ENCODE measurements at regions of chr10 and their contacts with region 1.

Region 1: DNA sequence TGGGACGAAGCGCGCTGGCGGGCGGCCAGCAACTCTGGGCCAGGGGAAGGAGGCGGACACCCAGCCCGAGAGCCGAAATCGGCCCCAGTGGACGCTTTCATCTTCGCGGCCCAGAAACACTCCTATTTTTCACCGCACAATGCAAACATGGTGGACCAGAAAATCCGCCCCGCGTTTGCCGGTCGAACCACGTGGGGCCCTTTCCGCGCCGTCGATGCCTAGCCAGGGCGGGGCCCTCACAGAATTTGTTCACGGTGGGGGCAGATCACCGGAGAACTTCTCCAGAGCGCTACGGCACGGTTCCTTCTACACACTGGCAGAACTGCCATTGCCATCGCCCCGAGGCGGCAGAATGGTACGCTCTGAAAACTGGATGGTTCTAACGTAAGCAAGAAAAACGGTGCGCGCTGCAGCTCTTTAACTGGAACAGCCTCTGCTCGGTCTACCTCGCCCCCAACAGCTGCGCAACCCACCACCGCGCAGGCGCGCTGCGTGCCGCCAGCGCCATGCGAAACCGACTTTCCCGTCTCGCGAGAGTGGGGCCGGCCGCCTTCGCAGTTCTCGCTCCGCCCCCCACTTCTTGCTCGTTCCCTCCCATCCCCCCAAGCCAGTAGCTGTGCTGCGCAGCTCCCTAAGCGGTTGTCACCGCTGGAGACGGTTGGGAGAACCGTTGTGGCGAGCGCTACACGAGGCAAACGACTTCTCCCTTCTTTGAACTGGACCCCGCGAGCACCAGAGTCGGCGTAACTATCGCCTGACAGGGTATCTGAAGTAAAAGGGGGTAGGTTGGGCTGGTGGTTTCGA is at the start of gene HNRNPH3:
- DNase-seq: peak; percentile 100
- ATAC-seq: peak; percentile 74
- H3K4me3 ChIP-seq: peak within 1 kb of the TSS; percentile 87
- H3K27ac ChIP-seq: peak within 1 kb of the TSS; percentile 82
- H3K4me1 ChIP-seq: peaks cover 44% of the 10 kb centered on the region
- H3K27me3 ChIP-seq: no peaks in the 10 kb centered on the region
- CTCF ChIP-seq: no peak
- total RNA-seq, gene HNRNPH3: 40.5 and 77.5 TPM in 2 replicates

Region 2: GRCh38 chr10:68082872-68083271 is 248.8 kb before region 1 on chr10:
- CTCF ChIA-PET with region 1: no interaction called
- POLR2A ChIA-PET with region 1: interaction called, 19 read pairs
- intact Hi-C with region 1: loop called (anchors 5 kb)
- DNase-seq: peak; percentile 89
- ATAC-seq: peak; percentile 14; the same call in 1 of the 2 replicates
- H3K4me3 ChIP-seq: no peak overlapping the region
- H3K27ac ChIP-seq: peak overlapping the region; percentile 57
- H3K4me1 ChIP-seq: peaks cover 63% of the 10 kb centered on the region
- H3K27me3 ChIP-seq: no peaks in the 10 kb centered on the region
- CTCF ChIP-seq: peak; percentile 98

Region 3: GRCh38 chr10:68088744-68089143 is 242.9 kb before region 1 on chr10:
- CTCF ChIA-PET with region 1: no interaction called
- POLR2A ChIA-PET with region 1: interaction called, 19 read pairs
- intact Hi-C with region 1: loop called (anchors 5 kb)
- DNase-seq: peak; percentile 49
- ATAC-seq: no peak
- H3K4me3 ChIP-seq: peak overlapping the region; percentile 66
- H3K27ac ChIP-seq: peak overlapping the region; percentile 91
- H3K4me1 ChIP-seq: peaks cover 92% of the 10 kb centered on the region
- H3K27me3 ChIP-seq: no peaks in the 10 kb centered on the region
- CTCF ChIP-seq: no peak

Region 4: DNA sequence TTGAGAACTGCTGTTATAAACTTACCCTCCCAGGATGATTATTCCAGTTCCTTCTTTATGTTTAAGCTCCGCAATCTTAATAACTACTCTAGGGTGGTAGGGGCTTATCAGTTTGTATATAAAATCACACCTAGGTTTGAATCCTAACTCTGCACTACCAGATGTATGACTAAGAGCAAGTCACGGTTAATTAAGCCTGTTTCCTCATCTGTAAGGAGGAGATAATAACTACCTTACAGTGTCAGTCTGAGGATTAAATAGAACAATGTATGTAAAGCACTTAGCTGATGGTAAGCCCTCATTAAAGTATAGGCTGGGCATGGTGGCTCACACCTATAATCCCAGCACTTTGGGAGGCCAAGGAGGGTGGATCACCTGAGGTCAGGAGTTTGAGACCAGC is 130.9 kb after region 1 on chr10:
- CTCF ChIA-PET with region 1: no interaction called
- POLR2A ChIA-PET with region 1: no interaction called
- intact Hi-C with region 1: no loop called
- DNase-seq: no peak
- ATAC-seq: no peak
- H3K4me3 ChIP-seq: no peak overlapping the region
- H3K27ac ChIP-seq: no peak overlapping the region
- H3K4me1 ChIP-seq: no peaks in the 10 kb centered on the region
- H3K27me3 ChIP-seq: no peaks in the 10 kb centered on the region
- CTCF ChIP-seq: no peak

Region 5: DNA sequence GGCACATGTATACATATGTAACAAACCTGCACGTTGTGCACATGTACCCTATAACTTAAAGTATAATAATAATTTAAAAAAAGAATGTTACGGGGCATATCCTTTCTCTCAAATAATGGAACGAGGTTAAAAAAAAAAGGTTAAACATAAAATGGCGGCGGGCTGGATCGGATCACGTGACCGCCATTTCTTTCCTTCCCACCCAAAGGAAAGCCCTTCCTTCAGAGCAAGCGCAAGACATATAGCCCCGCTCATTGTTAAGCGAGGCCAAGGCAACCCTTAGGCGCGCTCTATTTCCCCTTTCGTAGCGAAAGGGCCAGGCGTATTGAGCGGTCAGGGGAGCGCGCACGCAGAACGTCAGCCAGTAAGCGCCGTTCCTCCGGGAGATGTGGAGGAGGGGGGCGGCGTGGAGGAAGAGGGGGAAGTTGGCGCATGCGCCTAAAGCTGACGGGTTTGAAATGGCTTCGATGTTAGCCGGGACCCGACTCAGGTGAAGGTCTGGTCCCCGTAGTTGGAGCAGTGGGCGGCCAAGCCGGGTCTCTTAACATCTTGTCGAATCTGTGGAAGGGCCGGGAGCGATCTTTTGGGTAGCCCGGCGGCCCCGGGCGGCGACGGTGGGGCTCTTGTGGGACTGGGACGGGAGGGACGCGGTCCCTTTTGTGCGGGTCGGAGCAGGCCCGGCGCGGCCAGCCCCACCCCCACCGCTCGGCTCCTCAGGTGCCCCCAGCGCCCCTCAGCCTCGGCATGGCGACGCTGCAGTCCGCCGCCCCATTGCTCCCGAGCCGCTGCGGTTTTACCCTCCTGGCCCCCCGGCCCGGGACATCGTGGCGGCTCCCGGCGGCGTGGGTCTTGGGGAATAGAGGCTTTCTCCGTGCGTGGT is 389.4 kb after region 1 on chr10 and contains the start of gene CCAR1:
- CTCF ChIA-PET with region 1: no interaction called
- POLR2A ChIA-PET with region 1: no interaction called
- intact Hi-C with region 1: loop called (anchors 10 kb)
- DNase-seq: peak; percentile 99
- ATAC-seq: peak; percentile 99
- H3K4me3 ChIP-seq: peak within 1 kb of the TSS; percentile 86
- H3K27ac ChIP-seq: peak within 1 kb of the TSS; percentile 65
- H3K4me1 ChIP-seq: 0 out of 2 replicates have a peak, but pooled peaks cover 5% of the 10 kb centered on the region
- H3K27me3 ChIP-seq: no peaks in the 10 kb centered on the region
- CTCF ChIP-seq: no peak
- total RNA-seq, gene CCAR1: 64.9 and 92.1 TPM in 2 replicates

Region 6: DNA sequence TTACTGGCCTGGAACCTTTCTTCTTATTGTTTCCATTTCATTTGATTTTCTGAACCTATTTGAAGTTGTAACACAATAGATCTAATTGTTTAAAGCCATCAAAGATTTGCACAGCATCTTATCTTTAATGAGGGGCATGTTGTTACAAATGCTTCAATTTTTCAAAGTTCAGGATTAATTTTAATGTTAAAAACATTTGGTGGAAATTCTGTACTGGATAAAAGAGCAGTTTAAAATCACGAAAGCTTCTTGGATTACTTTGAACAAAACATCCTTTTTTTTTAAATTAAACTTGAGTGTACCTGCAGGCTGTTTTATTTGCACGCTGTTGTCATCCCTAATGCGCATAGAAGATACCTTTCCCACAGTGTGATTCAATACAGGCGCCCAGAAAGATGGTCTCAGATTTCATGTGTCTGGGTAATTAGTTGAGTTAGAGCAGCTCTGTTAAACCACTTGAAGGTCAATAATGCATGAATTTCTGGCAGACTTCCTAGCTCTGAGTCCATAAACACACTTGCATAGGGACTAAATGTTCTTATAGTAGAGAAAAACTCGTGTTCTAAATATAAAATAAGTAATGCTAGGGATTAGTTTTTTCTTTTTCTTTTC is 540.2 kb after region 1 on chr10:
- CTCF ChIA-PET with region 1: no interaction called
- POLR2A ChIA-PET with region 1: no interaction called
- intact Hi-C with region 1: no loop called
- DNase-seq: peak; percentile 87
- ATAC-seq: peak; percentile 98
- H3K4me3 ChIP-seq: no peak overlapping the region
- H3K27ac ChIP-seq: no peak overlapping the region
- H3K4me1 ChIP-seq: peaks cover 15% of the 10 kb centered on the region
- H3K27me3 ChIP-seq: no peaks in the 10 kb centered on the region
- CTCF ChIP-seq: no peak

Region 7: DNA sequence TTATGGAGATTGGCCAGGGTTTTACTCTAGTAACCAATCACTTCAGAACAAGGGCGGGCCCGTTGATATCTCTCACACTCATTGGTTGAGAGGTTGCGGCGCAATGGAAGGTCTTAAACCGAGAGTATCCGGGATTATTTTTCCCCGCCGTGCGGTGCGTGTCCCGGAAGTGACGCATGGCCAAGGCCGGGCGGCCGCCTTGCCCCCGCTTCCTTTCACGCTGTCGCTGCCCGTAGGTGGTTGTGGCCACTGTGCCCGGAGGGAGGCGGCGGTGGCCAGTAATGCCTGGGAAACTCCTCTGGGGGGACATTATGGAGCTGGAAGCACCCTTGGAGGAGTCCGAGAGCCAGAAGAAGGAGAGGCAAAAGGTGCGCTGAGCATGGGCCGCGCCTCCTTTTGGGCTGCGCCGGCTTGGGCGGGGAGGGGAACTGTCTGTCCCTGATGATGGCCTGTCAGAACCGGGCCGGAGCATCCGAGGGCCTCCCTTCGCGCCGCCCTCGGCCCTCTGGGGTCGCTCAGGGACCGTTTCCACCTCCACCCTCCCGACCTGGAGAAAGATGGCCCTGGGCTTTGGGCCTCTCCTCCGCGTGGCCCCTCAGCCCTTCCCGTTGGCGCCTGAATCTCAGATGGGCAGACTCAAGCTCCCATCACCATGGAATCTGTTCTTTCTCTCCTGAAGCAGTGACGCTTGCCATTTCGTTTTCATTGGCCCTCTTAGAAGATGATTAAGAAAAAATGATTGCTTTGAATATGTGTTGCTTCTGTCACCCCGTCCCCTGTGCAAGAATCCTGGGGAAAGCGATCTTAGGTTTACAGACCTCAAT is 569.7 kb after region 1 on chr10 and contains the start of gene DDX50:
- CTCF ChIA-PET with region 1: no interaction called
- POLR2A ChIA-PET with region 1: no interaction called
- intact Hi-C with region 1: loop called (anchors 5 kb)
- DNase-seq: peak; percentile 100
- ATAC-seq: peak; percentile 96
- H3K4me3 ChIP-seq: peak within 1 kb of the TSS; percentile 88
- H3K27ac ChIP-seq: peak within 1 kb of the TSS; percentile 85
- H3K4me1 ChIP-seq: peaks cover 16% of the 10 kb centered on the region
- H3K27me3 ChIP-seq: no peaks in the 10 kb centered on the region
- CTCF ChIP-seq: no peak
- total RNA-seq, gene DDX50: 40.4 and 41.4 TPM in 2 replicates

Region 8: GRCh38 chr10:68988530-68989316 is 657.1 kb after region 1 on chr10 and contains the start of gene KIFBP:
- CTCF ChIA-PET with region 1: no interaction called
- POLR2A ChIA-PET with region 1: interaction called, 24 read pairs
- intact Hi-C with region 1: no loop called
- DNase-seq: peak; percentile 99
- ATAC-seq: peak; percentile 85
- H3K4me3 ChIP-seq: peak within 1 kb of the TSS; percentile 80
- H3K27ac ChIP-seq: peak within 1 kb of the TSS; percentile 51
- H3K4me1 ChIP-seq: peaks cover 37% of the 10 kb centered on the region
- H3K27me3 ChIP-seq: no peaks in the 10 kb centered on the region
- CTCF ChIP-seq: peak; percentile 73
- total RNA-seq, gene KIFBP: 65.9 and 72.9 TPM in 2 replicates